Posterior cingulate gyrus (tissue), 11 donors: ENCODE measurements at regions of chr12 and their contacts with region 1.

Region 1: DNA sequence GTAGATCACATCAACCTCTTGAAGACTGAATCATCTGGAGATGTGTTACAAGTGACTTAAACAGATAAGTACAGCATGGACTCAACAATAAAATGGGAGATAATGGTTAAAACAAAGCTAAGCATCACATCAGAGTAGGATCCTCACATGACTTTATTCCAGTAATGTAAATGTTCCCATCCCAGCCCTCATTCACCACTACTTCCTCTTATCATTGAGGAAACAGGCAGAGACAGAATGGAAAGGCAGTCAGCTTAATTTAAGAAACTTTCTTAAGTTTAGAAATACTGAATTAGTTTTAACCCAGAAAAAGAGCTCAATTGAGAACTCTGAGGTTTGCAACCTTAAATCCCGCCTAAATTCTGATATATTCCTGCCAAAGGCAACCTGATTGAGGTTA is 1.2 kb upstream of the ALG10 start:
- DNase-seq: no peak

Region 2: DNA sequence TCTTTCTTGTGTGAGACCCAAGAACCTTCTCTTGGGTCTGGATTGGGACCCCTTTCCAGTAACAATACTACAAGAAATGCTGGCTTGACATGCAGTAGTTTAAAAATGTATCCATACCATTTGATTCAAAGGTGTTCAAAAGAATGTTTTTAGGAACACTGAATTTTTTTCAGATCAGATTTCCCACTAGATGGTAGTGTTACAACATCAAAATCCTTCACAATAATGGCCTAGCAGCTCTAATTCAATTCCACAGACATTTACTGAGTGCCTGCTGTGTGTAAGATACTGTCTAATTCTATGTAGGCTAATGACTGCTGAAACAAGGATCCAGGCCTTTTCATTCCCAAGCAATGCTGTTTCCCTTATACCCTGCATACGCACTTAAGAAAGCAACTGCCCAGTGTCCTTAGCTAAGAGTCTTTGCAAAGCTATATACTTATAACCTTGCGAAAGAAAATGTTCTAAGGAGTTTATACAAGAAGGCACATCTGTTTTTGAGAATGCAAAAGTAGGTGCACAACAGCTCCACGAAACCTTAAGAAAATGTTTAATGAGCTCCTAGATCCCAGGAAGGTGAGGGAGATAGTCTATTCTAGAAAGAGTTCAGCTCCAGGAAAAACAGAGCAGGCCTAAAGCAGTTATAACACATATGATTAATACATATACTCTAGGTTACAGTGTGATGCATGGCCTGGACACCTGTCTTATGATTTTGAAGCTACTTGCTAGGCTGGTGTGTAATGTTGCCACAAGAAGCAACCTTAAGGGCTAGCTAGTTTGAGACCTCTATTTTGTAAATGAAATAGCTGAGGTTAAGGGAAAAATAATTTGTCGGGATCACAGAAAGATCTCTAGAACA is 1073.6 kb before region 1 on chr12:
- intact Hi-C with region 1: loop called (anchors 2 kb)
- DNase-seq: no peak